GM10248 (cell line): ENCODE measurements at regions of chr1 and their contacts with region 1.

Region 1: GRCh38 chr1:70134148-70134547 is 71.2 kb downstream of the LRRC40 start:
- DNase-seq: no peak
- CTCF ChIP-seq: no peak

Region 2: DNA sequence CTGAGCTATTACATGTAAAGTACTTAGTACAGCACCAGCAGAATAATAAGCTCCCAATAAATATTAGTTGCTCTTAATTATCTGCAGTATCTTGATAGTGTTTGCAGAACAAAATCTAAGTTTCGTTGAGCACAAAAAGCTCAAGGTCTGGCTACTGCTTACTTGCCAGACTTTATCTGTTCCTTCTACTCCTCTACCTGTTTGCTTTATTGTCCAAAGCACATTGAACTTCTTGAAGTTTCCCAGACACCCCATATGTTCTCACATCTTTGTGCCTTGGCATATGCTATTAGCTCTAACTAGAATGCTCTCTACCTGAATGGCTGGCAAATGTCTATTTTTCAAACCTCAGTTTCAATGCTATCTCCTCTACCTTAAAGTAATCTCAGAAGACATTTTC is 16.3 kb after region 1 on chr1:
- CTCF ChIA-PET with region 1: interaction called, 14 read pairs
- POLR2A ChIA-PET with region 1: no interaction called
- DNase-seq: no peak
- CTCF ChIP-seq: no peak

Region 3: GRCh38 chr1:70509996-70510876 is 376.1 kb after region 1 on chr1:
- CTCF ChIA-PET with region 1: interaction called, 26 read pairs
- POLR2A ChIA-PET with region 1: no interaction called
- DNase-seq: peak; percentile 56
- CTCF ChIP-seq: peak; percentile 63